ENCODE measurements at regions of chr15 and their contacts with region 1.

Region 1: GRCh38 chr15:34101366-34102175 is at the starts of genes EMC7 and PGBD4:
- DNase-seq: peak; percentile 99
- ATAC-seq: peak; percentile 100
- total RNA-seq, gene EMC7: 63.9 to 88.7 TPM
- total RNA-seq, gene PGBD4: 1.9 to 2.2 TPM

Region 2: DNA sequence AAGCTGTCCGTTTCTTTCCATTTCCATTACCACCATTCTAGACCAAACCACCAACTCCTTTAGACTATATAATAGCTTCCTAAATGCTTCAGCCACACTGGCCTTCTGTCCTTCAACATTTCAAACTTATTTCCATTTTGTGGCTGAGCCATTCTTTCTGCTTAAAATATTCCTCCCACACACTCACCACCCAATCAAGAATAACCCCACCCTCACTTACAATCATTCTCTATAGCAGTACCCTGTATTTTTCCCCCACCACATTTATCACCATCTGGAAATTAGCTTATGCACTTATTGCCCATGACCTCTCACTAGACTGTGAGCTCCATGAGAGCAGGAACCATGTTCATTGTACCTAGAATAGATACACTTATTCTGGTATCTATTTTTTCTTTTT is 101.7 kb after region 1 on chr15:
- intact Hi-C with region 1: no loop called
- DNase-seq: no peak
- ATAC-seq: no peak

Region 3: GRCh38 chr15:34223904-34224596 is 122.5 kb after region 1 on chr15:
- intact Hi-C with region 1: loop called in 1 of 2 experiments (anchors 5 kb)
- DNase-seq: no peak
- ATAC-seq: peak; percentile 19 to 23

Region 4: DNA sequence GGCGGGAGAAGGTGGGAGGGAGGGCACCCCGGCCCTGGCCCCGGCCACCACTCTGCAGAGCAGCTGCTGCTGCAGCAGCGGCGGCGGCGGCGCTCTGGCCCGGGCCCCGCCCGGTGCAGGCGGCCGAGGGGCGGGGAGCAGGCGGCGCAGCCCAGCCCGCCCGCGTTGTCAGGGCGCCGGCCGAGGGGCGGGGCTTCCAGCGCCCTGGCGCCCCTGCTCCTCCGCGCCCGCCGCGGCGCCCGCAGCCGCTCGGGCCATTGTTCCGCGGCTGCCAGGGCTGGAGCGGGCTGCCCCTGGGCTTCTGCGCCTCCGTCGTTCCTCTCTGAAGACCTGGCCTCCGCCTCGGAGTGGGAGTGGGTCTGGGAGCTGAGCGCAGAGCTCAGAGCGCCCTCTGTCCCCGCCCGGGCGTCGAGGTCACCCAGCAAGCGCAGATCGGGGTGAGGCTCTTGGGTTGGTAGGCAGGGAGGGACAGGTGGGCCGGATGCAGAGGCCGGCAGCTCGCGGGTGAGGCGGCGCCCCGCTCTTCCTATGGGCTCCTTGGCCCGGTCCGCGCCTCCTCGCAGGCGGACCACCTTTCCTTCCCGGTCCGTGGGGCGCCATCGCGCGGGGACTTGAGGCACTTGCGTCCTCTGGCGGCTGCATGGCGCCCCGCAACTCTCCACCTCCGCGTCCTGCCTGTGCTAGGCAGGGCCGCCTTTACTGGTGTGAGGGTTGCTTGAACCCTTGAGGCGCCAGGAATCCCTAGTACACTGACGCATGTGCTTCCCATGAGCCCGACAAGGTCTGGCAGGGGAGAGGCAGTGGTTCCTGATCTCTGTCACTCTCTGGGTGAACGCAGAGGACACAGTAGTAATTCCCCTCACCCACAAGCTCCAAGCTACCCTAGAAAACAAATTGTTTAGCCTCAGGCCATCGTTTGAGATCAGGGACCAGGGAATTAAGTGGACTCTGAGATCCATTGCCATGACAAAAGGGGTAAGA is 265.8 kb after region 1 on chr15 and contains the start of gene LPCAT4:
- intact Hi-C with region 1: loop called in 1 of 2 experiments (anchors 10 kb)
- DNase-seq: peak; percentile 92
- ATAC-seq: peak; percentile 97
- total RNA-seq, gene LPCAT4: 31.3 to 43.7 TPM

Measured in left cardiac atrium (tissue), 4 donors.